Ascending aorta (tissue), 2 donors: ENCODE measurements at regions of chr6 and their contacts with region 1.

Region 1: DNA sequence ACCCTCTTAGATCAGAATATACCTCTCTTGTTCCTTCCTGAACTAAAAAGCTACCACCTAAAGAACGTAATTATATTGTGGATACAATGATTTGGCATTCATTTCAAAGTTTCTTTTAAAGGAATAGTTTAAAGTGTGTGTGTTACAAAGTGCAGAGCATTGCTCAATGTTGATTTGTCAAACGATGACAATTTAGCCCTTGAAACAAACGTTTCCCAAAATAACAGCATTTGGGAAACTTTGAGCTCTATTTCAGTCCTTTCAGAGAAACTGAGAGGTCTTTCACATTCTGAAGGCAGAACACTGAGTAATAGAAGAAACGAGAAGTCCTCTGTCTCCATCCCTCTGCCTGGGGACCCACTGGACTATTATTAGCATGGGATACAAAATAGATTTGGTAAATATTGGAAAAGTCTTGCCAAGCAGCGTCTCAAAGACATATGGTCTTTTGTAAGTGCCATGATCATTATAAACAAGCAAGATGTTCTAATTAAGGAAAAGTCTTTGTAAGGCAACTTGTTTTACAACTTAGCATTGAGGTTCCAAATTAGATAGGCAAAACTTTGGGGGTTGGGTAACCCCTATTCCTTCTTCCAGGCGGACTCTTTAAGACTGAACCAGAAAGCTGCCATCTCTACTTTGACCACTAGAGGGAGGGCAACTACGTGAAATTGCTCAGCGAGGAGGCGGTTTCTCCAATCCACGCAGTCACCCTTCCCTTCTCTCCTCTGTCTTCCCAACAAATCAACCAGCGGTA is 208.8 kb downstream of the RNF144B start:
- DNase-seq: peak in 1 of 2 donors; percentile 79
- H3K4me3 ChIP-seq: peak overlapping the region in 1 of 2 donors; percentile 51
- H3K27ac ChIP-seq: peak overlapping the region; percentile 56 to 65
- H3K4me1 ChIP-seq: no peaks in the 10 kb centered on the region
- H3K27me3 ChIP-seq: no peaks in the 10 kb centered on the region
- CTCF ChIP-seq: peak; percentile 72 to 93 (median 89)

Region 2: DNA sequence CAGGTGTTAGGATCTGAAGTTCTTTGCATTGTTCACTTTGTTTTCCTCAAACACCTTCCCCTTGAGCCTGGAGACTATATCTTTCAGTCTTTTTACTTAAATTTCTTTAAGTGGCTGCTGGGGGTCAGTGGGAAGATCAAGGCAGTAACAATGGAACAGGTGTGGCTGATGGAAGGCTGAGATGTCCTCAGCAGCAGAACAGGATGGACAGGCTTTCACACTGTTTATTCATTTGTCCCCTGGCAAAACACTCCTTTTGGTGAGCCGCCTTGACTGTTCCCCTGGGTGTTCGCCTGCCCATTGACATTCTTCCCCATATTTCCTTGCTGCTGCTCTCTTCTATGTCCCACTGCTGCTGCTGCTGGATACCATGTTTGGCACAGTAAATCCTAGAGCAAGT is 170.8 kb before region 1 on chr6:
- intact Hi-C with region 1: no loop called
- DNase-seq: no peak
- H3K4me3 ChIP-seq: no peak overlapping the region
- H3K27ac ChIP-seq: no peak overlapping the region
- H3K4me1 ChIP-seq: no peaks in the 10 kb centered on the region
- H3K27me3 ChIP-seq: no peaks in the 10 kb centered on the region
- CTCF ChIP-seq: no peak

Region 3: DNA sequence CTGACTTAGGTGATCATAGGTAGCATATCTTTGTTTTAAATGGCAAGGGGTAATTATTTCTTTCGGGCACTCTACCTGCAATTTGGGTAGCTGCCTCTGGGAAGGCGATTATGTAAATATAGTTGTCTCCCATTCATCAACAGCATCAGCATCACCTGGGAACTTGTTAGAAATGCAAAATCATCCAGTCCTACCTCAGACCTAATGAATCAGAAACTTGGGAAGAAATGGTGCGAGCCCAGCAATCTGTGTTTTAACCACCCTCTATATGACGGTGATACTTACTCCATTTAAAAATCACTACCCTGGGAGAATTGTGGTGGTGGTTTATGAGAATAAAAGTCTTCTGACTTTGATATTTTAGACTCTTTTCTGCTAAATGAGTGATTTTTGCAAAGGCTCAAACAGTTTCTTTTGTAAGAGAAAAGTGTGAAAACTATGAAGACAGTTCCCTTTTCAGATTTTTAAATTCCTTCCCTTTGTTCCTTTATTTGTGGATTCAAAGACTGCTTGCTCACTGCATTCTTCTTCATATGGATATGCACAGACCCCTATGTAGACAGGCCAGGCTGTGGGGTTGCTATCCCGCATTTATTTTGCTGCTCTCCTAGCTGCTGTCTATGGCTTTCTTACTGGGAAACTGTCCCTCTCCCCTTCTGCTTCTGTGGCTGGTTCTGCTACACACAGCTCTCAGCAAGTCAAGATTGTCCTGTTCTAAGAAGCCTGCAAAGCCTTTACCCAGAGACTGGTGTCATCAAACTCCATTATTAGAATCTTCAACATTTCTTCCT is 156.5 kb after region 1 on chr6:
- intact Hi-C with region 1: loop called (anchors 5 kb)
- DNase-seq: no peak
- H3K4me3 ChIP-seq: no peak overlapping the region
- H3K27ac ChIP-seq: no peak overlapping the region
- H3K4me1 ChIP-seq: peaks cover 0 to 3% of the 10 kb centered on the region in 2 donors
- H3K27me3 ChIP-seq: no peaks in the 10 kb centered on the region
- CTCF ChIP-seq: no peak